Common myeloid progenitor, CD34-positive (primary cell): ENCODE measurements at regions of chr14 and their contacts with region 1.

Region 1: GRCh38 chr14:60184146-60184904 is 19.1 kb upstream of the DHRS7 start:
- DNase-seq: peak; percentile 80 to 89 (median 86)
- H3K4me3 ChIP-seq: peak overlapping the region in 6 of 7 experiments; percentile 50 to 79 (median 69)
- H3K27ac ChIP-seq: peak overlapping the region; percentile 52 to 79
- H3K4me1 ChIP-seq: peaks cover 0 to 7% (median 3%) of the 10 kb centered on the region in 4 experiments
- H3K27me3 ChIP-seq: no peaks in the 10 kb centered on the region

Region 2: GRCh38 chr14:59964251-59965007 is 219.9 kb before region 1 on chr14:
- CTCF ChIA-PET with region 1: interaction called, 113 read pairs
- POLR2A ChIA-PET with region 1: no interaction called
- DNase-seq: peak in 1 of 3 donors; percentile 2
- H3K4me3 ChIP-seq: peak overlapping the region in 2 of 7 experiments; percentile 11 to 67
- H3K27ac ChIP-seq: no peak overlapping the region
- H3K4me1 ChIP-seq: no peaks in the 10 kb centered on the region
- H3K27me3 ChIP-seq: peaks cover 0 to 7% (median 0%) of the 10 kb centered on the region in 5 experiments

Region 3: DNA sequence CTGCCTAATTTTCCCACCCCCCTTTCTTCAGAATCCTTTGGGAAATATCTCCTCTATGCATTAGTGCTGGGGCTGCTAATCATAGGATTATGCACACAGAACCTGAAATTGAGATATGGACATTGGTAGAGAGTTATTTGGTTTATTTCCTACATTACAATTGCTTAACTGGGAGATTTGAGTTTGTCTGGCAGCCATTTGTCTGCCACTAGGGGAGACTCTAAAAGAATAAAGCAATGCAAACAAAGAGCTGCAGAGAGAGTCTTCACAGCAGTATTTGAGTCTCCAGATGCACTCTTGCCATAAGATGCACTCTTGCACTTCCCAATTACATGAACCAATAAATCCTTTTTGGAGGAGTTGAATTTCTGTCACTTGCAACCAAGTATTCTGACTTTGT is 104.6 kb before region 1 on chr14:
- CTCF ChIA-PET with region 1: interaction called, 19 read pairs
- POLR2A ChIA-PET with region 1: no interaction called
- DNase-seq: peak in 2 of 3 donors; percentile 8 to 9
- H3K4me3 ChIP-seq: no peak overlapping the region
- H3K27ac ChIP-seq: no peak overlapping the region
- H3K4me1 ChIP-seq: no peaks in the 10 kb centered on the region
- H3K27me3 ChIP-seq: no peaks in the 10 kb centered on the region

Region 4: GRCh38 chr14:60195179-60195810 is 11.0 kb after region 1 on chr14:
- CTCF ChIA-PET with region 1: interaction called, 11 read pairs
- POLR2A ChIA-PET with region 1: interaction called, 3 read pairs
- DNase-seq: peak; percentile 43 to 52 (median 49)
- H3K4me3 ChIP-seq: no peak overlapping the region
- H3K27ac ChIP-seq: peak overlapping the region in 1 of 2 experiments; percentile 1
- H3K4me1 ChIP-seq: peaks cover 8 to 27% (median 22%) of the 10 kb centered on the region in 4 experiments
- H3K27me3 ChIP-seq: no peaks in the 10 kb centered on the region

Region 5: GRCh38 chr14:60561845-60562746 is 377.8 kb after region 1 on chr14:
- CTCF ChIA-PET with region 1: interaction called, 22 read pairs
- POLR2A ChIA-PET with region 1: no interaction called
- DNase-seq: peak; percentile 64 to 81 (median 80)
- H3K4me3 ChIP-seq: no peak overlapping the region
- H3K27ac ChIP-seq: no peak overlapping the region
- H3K4me1 ChIP-seq: no peaks in the 10 kb centered on the region
- H3K27me3 ChIP-seq: peaks cover 0 to 8% (median 0%) of the 10 kb centered on the region in 5 experiments